ENCODE measurements at regions of chrX and their contacts with region 1.

Region 1: GRCh38 chrX:66110112-66110511 is 53.9 kb upstream of the HEPH start:
- DNase-seq: peak; percentile 41 to 60 (median 53)
- ATAC-seq: peak; percentile 87
- H3K4me3 ChIP-seq: no peak overlapping the region
- H3K27ac ChIP-seq: no peak overlapping the region
- H3K4me1 ChIP-seq: peaks cover 0 to 3% of the 10 kb centered on the region in 2 experiments; a peak in 1 of 5 replicates
- H3K27me3 ChIP-seq: no peaks in the 10 kb centered on the region
- CTCF ChIP-seq: peak; percentile 65 to 96 (median 94)
- EP300 ChIP-seq: no peak
- POLR2A ChIP-seq: no peak
- RAD21 ChIP-seq: peak; percentile 77 to 80

Region 2: GRCh38 chrX:65745992-65746391 is 364.1 kb before region 1 on chrX:
- CTCF ChIA-PET with region 1: no interaction called
- POLR2A ChIA-PET with region 1: no interaction called
- in situ Hi-C with region 1: no loop called
- intact Hi-C with region 1: loop called (anchors 2 kb)
- DNase-seq: peak in 1 of 4 experiments; percentile 56
- ATAC-seq: peak; percentile 63
- H3K4me3 ChIP-seq: no peak overlapping the region
- H3K27ac ChIP-seq: no peak overlapping the region
- H3K4me1 ChIP-seq: no peaks in the 10 kb centered on the region; a peak in 1 of 5 replicates
- H3K27me3 ChIP-seq: no peaks in the 10 kb centered on the region
- CTCF ChIP-seq: peak; percentile 39 to 68 (median 40); a peak in 4 of 6 replicates
- EP300 ChIP-seq: no peak
- POLR2A ChIP-seq: no peak
- RAD21 ChIP-seq: peak; percentile 53 to 71

Region 3: DNA sequence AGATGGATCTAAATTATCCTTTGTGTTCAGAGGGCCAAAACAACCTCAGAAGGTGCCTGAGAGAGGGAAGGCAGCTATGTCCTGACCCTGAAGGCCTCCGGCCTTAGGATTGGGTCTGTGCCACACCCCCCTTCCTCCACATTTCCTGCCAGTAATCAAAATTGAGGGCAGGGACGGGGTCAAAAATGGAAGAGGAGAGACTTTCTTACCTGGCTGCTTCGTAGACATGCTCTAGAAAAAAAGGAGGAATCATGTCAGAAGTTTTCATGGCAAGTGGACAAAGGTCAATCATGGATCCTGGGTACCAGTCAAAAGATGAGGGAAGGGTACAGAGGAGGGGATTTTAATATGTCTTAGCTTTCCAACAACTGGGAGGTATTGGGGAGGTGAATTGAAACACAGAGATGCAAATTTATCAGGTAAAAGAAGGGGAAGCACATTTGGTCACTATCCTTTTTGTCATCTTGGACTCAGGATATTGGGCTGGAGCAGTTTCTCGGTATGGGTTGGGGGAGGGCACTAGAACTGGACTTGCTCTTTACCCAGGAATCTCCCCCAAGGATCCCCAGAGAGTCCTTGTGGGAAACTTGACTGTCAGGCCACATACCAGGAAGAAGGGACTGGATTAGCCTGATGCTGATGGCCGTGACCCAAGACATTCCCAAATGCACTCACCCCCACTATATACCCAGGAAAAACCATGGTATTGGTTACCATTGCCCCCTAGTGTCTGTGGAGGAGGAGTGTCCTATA is 87.3 kb before region 1 on chrX:
- CTCF ChIA-PET with region 1: interaction called, 4 read pairs
- POLR2A ChIA-PET with region 1: no interaction called
- in situ Hi-C with region 1: no loop called
- intact Hi-C with region 1: loop called (anchors 2 kb)
- DNase-seq: peak; percentile 45 to 73 (median 52)
- ATAC-seq: peak; percentile 62
- H3K4me3 ChIP-seq: no peak overlapping the region
- H3K27ac ChIP-seq: peak overlapping the region; percentile 52
- H3K4me1 ChIP-seq: peaks cover 13 to 54% of the 10 kb centered on the region in 2 experiments
- H3K27me3 ChIP-seq: no peaks in the 10 kb centered on the region
- CTCF ChIP-seq: peak; percentile 65 to 78 (median 72); a peak in 5 of 6 replicates
- EP300 ChIP-seq: peak; percentile 11; the same call in 1 of the 2 replicates
- POLR2A ChIP-seq: peak; percentile 57
- RAD21 ChIP-seq: peak; percentile 63 to 75

Region 4: GRCh38 chrX:66098162-66098561 is 11.9 kb before region 1 on chrX:
- CTCF ChIA-PET with region 1: no interaction called
- POLR2A ChIA-PET with region 1: no interaction called
- in situ Hi-C with region 1: no loop called
- intact Hi-C with region 1: no loop called
- DNase-seq: no peak
- ATAC-seq: no peak
- H3K4me3 ChIP-seq: no peak overlapping the region
- H3K27ac ChIP-seq: no peak overlapping the region
- H3K4me1 ChIP-seq: no peaks in the 10 kb centered on the region
- H3K27me3 ChIP-seq: no peaks in the 10 kb centered on the region
- CTCF ChIP-seq: no peak
- EP300 ChIP-seq: no peak
- POLR2A ChIP-seq: no peak
- RAD21 ChIP-seq: no peak

Region 5: DNA sequence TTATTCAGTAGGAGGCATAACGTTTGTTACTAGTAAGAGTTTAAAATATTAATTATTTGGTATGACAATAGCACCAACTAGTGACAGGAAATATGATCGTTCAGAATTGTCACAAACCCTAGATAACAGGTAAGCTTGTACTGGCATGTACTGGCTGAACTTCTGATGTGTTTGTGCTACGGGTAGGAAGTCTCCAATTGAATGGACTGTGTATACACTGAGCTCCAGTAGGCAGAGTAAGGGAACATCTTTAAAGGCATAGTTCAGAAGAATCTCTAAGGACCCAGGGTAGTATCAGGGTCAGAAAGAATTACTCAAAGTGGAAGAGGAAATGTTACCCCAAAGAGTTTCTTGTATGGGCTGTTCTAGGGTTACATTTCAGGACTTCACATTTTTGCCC is 298.4 kb after region 1 on chrX:
- CTCF ChIA-PET with region 1: no interaction called
- POLR2A ChIA-PET with region 1: no interaction called
- in situ Hi-C with region 1: no loop called
- intact Hi-C with region 1: loop called (anchors 5 kb)
- DNase-seq: peak; percentile 3 to 15 (median 4)
- ATAC-seq: peak; percentile 71
- H3K4me3 ChIP-seq: no peak overlapping the region
- H3K27ac ChIP-seq: no peak overlapping the region
- H3K4me1 ChIP-seq: no peaks in the 10 kb centered on the region
- H3K27me3 ChIP-seq: no peaks in the 10 kb centered on the region; a peak in 1 of 5 replicates
- CTCF ChIP-seq: peak in 2 of 3 experiments; percentile 13 to 56; a peak in 2 of 6 replicates
- EP300 ChIP-seq: no peak
- POLR2A ChIP-seq: no peak
- RAD21 ChIP-seq: peak in 1 of 2 experiments; percentile 54; a peak in 3 of 4 replicates

Measured in K562 (cell line).